ENCODE measurements at regions of chr1 and their contacts with region 1.

Region 1: GRCh38 chr1:209248649-209249279 is 334.8 kb upstream of the CAMK1G start:
- DNase-seq: no peak
- H3K4me3 ChIP-seq: no peak overlapping the region
- H3K27me3 ChIP-seq: no peaks in the 10 kb centered on the region
- CTCF ChIP-seq: peak; percentile 85

Region 2: DNA sequence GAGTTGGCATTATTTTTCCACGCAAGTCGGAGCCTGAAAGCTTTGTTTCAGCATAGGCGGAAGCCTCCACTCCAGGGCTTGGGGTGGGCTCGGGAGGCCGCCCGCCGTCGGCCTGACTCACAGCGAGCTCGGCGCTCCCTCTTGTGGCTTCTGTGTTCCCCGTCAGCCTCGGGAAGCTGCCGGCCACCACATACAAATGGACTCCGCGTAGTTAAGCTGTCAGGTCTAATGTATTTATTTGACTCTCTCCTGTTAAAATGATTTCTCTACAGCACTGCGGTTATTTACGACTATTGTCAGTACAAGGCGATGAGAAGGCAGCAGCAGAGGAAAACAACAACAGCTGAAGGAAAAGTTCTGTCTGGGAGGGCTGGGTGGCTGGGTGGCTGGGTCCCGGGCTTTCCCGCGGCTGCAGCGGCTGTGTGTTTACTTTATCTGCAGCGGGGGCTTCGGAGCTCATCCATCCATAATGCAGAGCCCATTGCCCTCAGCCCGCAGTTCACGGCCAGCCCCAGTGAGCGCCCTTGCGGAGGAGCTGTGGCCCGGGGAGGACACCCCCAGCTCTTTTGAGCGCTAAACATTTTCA is 41.0 kb before region 1 on chr1:
- CTCF ChIA-PET with region 1: interaction called, 19 read pairs
- POLR2A ChIA-PET with region 1: no interaction called
- DNase-seq: no peak
- H3K4me3 ChIP-seq: 0 out of 2 replicates have a peak overlapping the region, but pooled peaks have one; percentile 14
- H3K27me3 ChIP-seq: peaks cover 22% of the 10 kb centered on the region
- CTCF ChIP-seq: peak; percentile 92

Region 3: DNA sequence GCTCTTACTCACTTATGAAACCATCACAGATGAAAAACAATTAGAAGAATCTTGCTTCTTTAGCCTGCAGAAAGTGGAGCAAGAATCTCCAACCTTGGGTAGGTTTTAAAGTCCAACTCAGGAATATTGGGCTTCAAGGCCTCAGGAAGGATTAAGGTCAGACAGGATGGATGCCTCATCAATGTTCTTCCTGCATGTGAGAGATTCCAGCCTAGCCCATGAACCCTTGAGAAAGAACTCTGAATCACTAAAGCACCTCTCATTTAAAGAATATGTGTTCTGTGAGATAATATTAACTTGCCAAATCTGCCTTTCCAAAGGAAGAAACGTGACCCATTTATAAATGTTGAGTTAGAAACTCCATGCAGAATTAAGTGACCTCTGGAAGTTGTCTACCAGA is 10.4 kb before region 1 on chr1:
- CTCF ChIA-PET with region 1: interaction called, 35 read pairs
- POLR2A ChIA-PET with region 1: no interaction called
- DNase-seq: no peak
- H3K4me3 ChIP-seq: no peak overlapping the region
- H3K27me3 ChIP-seq: no peaks in the 10 kb centered on the region; the same call in 1 of the 2 replicates
- CTCF ChIP-seq: no peak

Region 4: GRCh38 chr1:209260136-209260535 is 11.4 kb after region 1 on chr1:
- CTCF ChIA-PET with region 1: interaction called, 28 read pairs
- POLR2A ChIA-PET with region 1: no interaction called
- DNase-seq: no peak
- H3K4me3 ChIP-seq: no peak overlapping the region
- H3K27me3 ChIP-seq: no peaks in the 10 kb centered on the region
- CTCF ChIP-seq: no peak

Region 5: GRCh38 chr1:209354111-209354839 is 105.5 kb after region 1 on chr1:
- CTCF ChIA-PET with region 1: interaction called, 27 read pairs
- POLR2A ChIA-PET with region 1: no interaction called
- DNase-seq: peak; percentile 31
- H3K4me3 ChIP-seq: no peak overlapping the region
- H3K27me3 ChIP-seq: no peaks in the 10 kb centered on the region
- CTCF ChIP-seq: peak; percentile 95

Region 6: GRCh38 chr1:209435654-209436566 is 187.1 kb after region 1 on chr1:
- CTCF ChIA-PET with region 1: interaction called, 22 read pairs
- POLR2A ChIA-PET with region 1: no interaction called
- DNase-seq: no peak
- H3K4me3 ChIP-seq: no peak overlapping the region
- H3K27me3 ChIP-seq: no peaks in the 10 kb centered on the region
- CTCF ChIP-seq: peak; percentile 88

Measured in BJ (cell line).